Mucosa of descending colon (tissue), 3 donors: ENCODE measurements at regions of chr7 and their contacts with region 1.

Region 1: GRCh38 chr7:145219461-145219860 is 383.6 kb upstream of the TPK1 start:
- DNase-seq: no peak
- ATAC-seq: no peak
- H3K4me3 ChIP-seq: no peak overlapping the region
- H3K4me1 ChIP-seq: no peaks in the 10 kb centered on the region
- CTCF ChIP-seq: no peak

Region 2: DNA sequence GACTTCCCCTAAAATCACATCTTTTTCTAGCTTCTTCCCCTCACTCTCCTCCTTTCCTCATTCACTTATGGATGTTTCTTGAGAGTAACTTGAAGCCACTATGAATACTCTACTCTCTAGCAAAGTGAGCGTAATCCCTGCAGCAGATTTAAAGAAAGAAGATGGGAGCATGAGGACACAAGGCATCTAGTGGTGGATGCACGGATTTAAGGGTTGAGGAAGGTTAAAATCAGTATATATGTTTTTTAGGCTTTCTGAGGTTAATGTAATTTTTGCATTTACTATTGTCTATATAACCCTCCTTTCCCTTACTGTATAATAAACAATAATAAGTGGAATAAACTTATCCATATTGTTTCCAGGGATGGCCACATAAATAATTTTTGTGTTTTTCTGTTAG is 111.6 kb after region 1 on chr7:
- intact Hi-C with region 1: no loop called
- DNase-seq: no peak
- ATAC-seq: no peak
- H3K4me3 ChIP-seq: no peak overlapping the region
- H3K4me1 ChIP-seq: no peaks in the 10 kb centered on the region
- CTCF ChIP-seq: no peak

Region 3: GRCh38 chr7:146115851-146116520 is 896.5 kb after region 1 on chr7:
- intact Hi-C with region 1: loop called in 1 of 2 experiments (anchors 5 kb)
- DNase-seq: peak; percentile 26 to 40 (median 26)
- ATAC-seq: peak; percentile 67
- H3K4me3 ChIP-seq: no peak overlapping the region
- H3K4me1 ChIP-seq: peaks cover 3% of the 10 kb centered on the region
- CTCF ChIP-seq: no peak